ENCODE measurements at regions of chr16 and their contacts with region 1.

Region 1: GRCh38 chr16:17467923-17468540 is 2.7 kb downstream of the XYLT1 start:
- DNase-seq: peak in 1 of 2 donors; percentile 82
- H3K4me3 ChIP-seq: peak overlapping the region; percentile 76 to 92
- H3K27ac ChIP-seq: no peak overlapping the region
- H3K4me1 ChIP-seq: peaks cover 2 to 18% of the 10 kb centered on the region in 2 donors
- H3K27me3 ChIP-seq: no peaks in the 10 kb centered on the region
- CTCF ChIP-seq: peak; percentile 62 to 81 (median 66)

Region 2: GRCh38 chr16:17194190-17194780 is 273.7 kb before region 1 on chr16:
- intact Hi-C with region 1: loop called (anchors 5 kb)
- DNase-seq: peak in 1 of 2 donors; percentile 68
- H3K4me3 ChIP-seq: no peak overlapping the region
- H3K27ac ChIP-seq: no peak overlapping the region
- H3K4me1 ChIP-seq: no peaks in the 10 kb centered on the region
- H3K27me3 ChIP-seq: no peaks in the 10 kb centered on the region
- CTCF ChIP-seq: peak; percentile 23 to 68 (median 64)

Region 3: DNA sequence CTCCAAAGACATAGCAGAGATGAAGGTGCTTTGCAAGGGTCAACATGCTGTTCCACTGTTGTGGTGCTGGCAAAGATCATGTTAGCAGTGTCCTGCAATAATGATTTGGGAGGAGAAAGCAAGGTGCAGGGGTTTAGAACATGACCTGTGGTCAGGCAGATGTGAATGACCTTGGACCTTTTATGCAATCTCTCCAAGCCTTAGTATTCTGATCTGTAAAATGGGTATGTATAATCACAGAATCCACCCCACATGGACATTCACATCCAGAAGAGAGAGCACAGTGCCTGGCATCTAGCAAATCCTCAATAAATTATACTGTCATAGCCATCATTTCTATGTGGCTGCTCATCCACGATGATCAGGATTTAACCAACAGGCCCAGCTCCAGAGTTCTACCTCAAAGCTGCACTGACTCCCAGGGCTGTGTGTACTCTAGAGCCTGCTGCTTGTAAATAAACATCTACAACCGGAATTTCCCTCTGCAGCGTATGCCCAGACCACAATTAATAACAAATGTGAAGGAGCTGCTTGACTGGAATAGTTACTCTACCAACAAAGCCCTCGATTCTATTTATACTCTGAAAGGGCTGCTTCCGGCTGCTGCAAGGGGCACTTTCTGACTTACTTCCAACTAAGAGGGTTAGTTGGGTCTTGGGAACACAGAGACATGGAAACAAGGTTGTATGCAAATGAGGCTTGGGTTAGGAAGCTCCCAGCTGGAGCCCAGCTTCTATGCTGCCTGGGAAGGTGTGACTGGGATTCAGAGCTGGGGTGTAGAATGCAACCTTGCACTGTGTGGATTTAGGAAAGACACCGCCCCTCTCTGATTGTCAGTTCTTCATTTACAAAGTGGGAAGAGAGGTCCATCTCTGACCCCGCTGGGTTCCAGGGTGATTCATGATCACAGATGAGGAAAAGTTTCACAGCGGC is 262.5 kb before region 1 on chr16:
- intact Hi-C with region 1: loop called (anchors 5 kb)
- DNase-seq: no peak
- H3K4me3 ChIP-seq: no peak overlapping the region
- H3K27ac ChIP-seq: no peak overlapping the region
- H3K4me1 ChIP-seq: no peaks in the 10 kb centered on the region
- H3K27me3 ChIP-seq: no peaks in the 10 kb centered on the region
- CTCF ChIP-seq: no peak

Region 4: GRCh38 chr16:17277977-17278381 is 190.1 kb before region 1 on chr16:
- intact Hi-C with region 1: loop called (anchors 2 kb)
- DNase-seq: no peak
- H3K4me3 ChIP-seq: no peak overlapping the region
- H3K27ac ChIP-seq: no peak overlapping the region
- H3K4me1 ChIP-seq: no peaks in the 10 kb centered on the region
- H3K27me3 ChIP-seq: no peaks in the 10 kb centered on the region
- CTCF ChIP-seq: peak; percentile 18 to 52 (median 35)

Region 5: DNA sequence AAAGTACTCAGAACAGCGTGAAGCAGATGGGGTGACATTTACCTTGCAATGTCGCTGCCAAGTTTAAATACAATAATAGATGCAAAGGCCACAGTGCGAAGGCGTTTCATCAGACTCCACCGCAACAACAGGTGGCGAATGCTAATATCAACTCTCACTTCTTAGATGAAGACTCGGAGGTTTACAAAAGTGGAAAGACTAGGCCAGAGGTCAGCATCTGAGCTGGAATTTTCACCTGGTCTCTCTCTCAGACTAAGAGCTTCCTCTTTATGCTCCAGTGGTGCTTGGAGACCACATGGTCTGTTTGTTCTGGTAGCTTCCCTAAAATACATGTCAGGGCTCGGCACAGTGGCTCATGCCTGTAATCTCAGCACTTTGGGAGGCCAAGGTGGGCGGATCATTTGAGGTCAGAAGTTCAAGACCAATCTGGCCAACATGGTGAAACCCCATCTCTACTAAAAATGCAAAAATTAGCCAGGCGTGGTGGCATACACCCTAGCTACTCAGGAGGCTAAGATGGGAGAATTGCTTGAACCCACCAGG is 166.4 kb before region 1 on chr16:
- intact Hi-C with region 1: no loop called
- DNase-seq: no peak
- H3K4me3 ChIP-seq: no peak overlapping the region
- H3K27ac ChIP-seq: no peak overlapping the region
- H3K4me1 ChIP-seq: peaks cover 4% of the 10 kb centered on the region in 2 donors
- H3K27me3 ChIP-seq: no peaks in the 10 kb centered on the region
- CTCF ChIP-seq: no peak

Region 6: GRCh38 chr16:17334096-17334495 is 133.9 kb before region 1 on chr16:
- intact Hi-C with region 1: loop called (anchors 2 kb)
- DNase-seq: peak; percentile 45 to 88
- H3K4me3 ChIP-seq: no peak overlapping the region
- H3K27ac ChIP-seq: peak overlapping the region; percentile 62 to 74
- H3K4me1 ChIP-seq: peaks cover 2 to 29% of the 10 kb centered on the region in 2 donors
- H3K27me3 ChIP-seq: no peaks in the 10 kb centered on the region
- CTCF ChIP-seq: no peak

Region 7: DNA sequence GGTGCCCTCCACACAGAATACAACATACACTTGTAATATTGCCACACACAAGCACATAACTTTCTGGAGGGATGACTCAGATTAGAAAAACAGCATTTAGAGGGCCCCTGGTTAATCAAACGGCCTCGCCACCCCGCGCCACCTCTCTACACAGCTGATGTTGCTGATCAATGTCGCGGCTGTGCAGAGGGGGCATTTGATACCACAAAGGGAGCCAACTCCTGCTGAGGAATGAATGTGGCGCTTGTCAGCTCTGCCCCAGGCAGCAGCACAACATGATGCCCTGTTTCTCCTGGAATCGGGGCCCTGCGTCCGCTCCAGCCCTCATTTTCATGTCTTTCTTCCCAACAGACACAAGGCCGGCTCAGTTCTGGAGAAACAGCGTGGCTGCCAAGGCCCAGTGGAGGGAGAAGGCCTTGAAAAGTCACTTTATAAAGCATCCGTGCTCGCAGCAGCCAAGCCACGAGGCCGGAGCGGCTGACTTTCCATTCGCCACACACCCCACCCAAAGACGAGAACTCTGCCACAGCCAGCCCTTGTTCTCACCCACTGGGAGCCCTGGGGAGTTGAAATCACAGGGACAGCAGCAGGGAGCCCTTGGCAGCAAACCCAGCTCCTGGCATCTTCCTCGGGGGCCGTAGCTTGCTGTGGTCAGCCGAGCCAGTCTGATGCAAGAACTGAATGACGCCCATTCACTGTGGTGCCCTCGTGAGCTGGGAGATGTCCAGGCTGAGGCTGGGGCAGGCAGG is 62.9 kb before region 1 on chr16:
- intact Hi-C with region 1: loop called (anchors 2 kb)
- DNase-seq: peak; percentile 84 to 94
- H3K4me3 ChIP-seq: peak overlapping the region; percentile 2 to 39
- H3K27ac ChIP-seq: peak overlapping the region; percentile 86 to 96
- H3K4me1 ChIP-seq: peaks cover 4 to 22% of the 10 kb centered on the region in 2 donors
- H3K27me3 ChIP-seq: no peaks in the 10 kb centered on the region
- CTCF ChIP-seq: no peak

Region 8: DNA sequence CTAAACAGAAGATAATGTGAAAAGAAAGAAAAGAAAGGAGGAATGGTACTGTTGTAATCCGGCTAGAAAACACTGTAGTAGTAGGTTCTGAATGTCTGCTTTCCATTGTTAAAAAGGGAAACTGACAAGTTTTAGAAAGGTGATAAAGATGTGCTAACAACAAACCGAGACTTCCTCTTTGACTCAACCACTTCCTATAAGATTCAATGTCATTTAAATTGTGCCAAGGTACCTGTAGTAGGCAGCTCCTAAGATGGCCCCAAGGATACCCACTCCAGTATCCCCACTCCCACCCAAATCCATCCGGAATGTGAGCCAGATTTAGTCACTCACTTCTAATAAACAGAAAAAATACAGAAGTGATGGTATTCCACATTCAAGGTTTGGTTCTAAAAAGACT is 28.5 kb before region 1 on chr16:
- intact Hi-C with region 1: no loop called
- DNase-seq: no peak
- H3K4me3 ChIP-seq: no peak overlapping the region
- H3K27ac ChIP-seq: no peak overlapping the region
- H3K4me1 ChIP-seq: peaks cover 0 to 3% of the 10 kb centered on the region in 2 donors
- H3K27me3 ChIP-seq: no peaks in the 10 kb centered on the region
- CTCF ChIP-seq: no peak

Measured in ascending aorta (tissue), 2 donors.